Activated naive CD4-positive, alpha-beta T cell treated with anti-CD3 and anti-CD28 coated beads for 36 hours (primary cell): ENCODE measurements at regions of chr12 and their contacts with region 1.

Region 1: DNA sequence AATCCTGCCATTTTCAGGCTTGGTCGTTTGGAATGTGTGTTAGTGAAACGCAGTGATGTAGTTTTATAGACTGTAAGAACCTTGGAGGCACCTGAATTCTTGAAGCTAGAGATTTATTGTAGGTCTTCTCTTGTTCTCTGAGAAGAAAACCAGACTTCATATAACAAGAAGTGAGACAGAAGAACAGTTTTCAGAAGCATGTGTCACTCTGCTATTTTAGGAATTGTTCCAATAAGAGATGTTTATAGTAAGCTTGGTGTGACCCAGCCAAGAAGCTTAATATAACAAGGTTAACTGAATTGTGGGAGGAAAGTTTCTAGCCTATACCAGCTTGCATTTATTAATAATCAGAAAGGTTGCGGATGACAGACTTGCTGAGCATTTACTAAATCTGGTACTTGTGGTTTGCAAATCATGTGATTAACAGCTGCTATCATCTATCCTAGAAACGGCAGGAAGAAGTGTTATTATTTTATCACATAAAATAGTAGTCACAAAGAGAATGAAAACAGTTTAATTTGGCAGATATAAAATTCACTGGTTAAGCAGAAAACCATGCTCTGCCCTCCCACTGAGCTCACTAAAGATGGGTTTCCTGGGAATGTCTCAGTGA is 49.2 kb upstream of the BCAT1 start:
- DNase-seq: peak; percentile 20
- H3K4me3 Mint-ChIP-seq: no peak overlapping the region
- H3K27ac Mint-ChIP-seq: peak overlapping the region; percentile 75
- H3K4me1 Mint-ChIP-seq: peaks cover 36% of the 10 kb centered on the region
- H3K27me3 Mint-ChIP-seq: no peaks in the 10 kb centered on the region

Region 2: DNA sequence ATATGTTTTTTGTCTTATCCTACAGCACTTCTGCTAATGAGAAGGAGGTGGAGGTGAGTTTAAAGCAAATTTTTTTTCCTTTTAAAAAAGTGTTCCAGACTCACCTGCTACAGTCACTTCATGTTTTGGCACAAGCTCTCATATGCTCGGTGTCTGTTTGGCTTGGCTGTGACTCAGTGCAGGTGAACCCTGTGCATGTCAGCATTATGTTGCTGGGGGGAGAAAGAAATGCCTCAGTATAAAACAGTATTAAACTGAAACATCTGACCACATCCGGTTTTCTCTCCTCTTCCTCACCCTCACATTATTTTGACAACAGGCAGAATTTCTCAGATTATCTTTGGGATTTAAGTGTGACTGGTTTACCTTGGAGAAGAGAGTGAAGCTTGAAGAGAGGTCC is 91.7 kb after region 1 on chr12:
- CTCF ChIA-PET with region 1: no interaction called
- intact Hi-C with region 1: loop called (anchors 1 kb)
- DNase-seq: peak; percentile 50
- H3K4me3 Mint-ChIP-seq: no peak overlapping the region
- H3K27ac Mint-ChIP-seq: no peak overlapping the region
- H3K4me1 Mint-ChIP-seq: peaks cover 29% of the 10 kb centered on the region
- H3K27me3 Mint-ChIP-seq: no peaks in the 10 kb centered on the region

Region 3: GRCh38 chr12:25119020-25119419 is 120.9 kb after region 1 on chr12:
- CTCF ChIA-PET with region 1: interaction called, 5 read pairs
- intact Hi-C with region 1: loop called (anchors 2 kb)
- DNase-seq: no peak
- H3K4me3 Mint-ChIP-seq: no peak overlapping the region
- H3K27ac Mint-ChIP-seq: no peak overlapping the region
- H3K4me1 Mint-ChIP-seq: peaks cover 6% of the 10 kb centered on the region
- H3K27me3 Mint-ChIP-seq: peaks cover 3% of the 10 kb centered on the region

Region 4: GRCh38 chr12:25195056-25195971 is 197.2 kb after region 1 on chr12 and contains the starts of genes DNAI7 and ETFRF1:
- CTCF ChIA-PET with region 1: no interaction called
- intact Hi-C with region 1: loop called (anchors 1 kb)
- DNase-seq: peak; percentile 94
- H3K4me3 Mint-ChIP-seq: peak within 1 kb of the TSS; percentile 98
- H3K27ac Mint-ChIP-seq: peak within 1 kb of the TSS; percentile 94
- H3K4me1 Mint-ChIP-seq: peaks cover 22% of the 10 kb centered on the region
- H3K27me3 Mint-ChIP-seq: no peaks in the 10 kb centered on the region
- total RNA-seq, gene DNAI7: 0.10 to 0.35 TPM
- total RNA-seq, gene ETFRF1: 11.4 to 13.1 TPM